CD8-positive, alpha-beta T cell (primary cell): ENCODE measurements at regions of chr17 and their contacts with region 1.

Region 1: GRCh38 chr17:76264755-76265596 is at the start of gene UBALD2:
- DNase-seq: peak; percentile 97 to 99 (median 98)
- ATAC-seq: peak; percentile 80
- H3K4me3 ChIP-seq: peak within 1 kb of the TSS; percentile 76 to 94
- H3K4me3 Mint-ChIP-seq: peak within 1 kb of the TSS; percentile 90
- H3K27ac ChIP-seq: peak within 1 kb of the TSS; percentile 74 to 79
- H3K27ac Mint-ChIP-seq: peak within 1 kb of the TSS; percentile 95
- H3K4me1 ChIP-seq: peaks cover 68% of the 10 kb centered on the region
- H3K4me1 Mint-ChIP-seq: peaks cover 60% of the 10 kb centered on the region
- H3K27me3 ChIP-seq: no peaks in the 10 kb centered on the region
- H3K27me3 Mint-ChIP-seq: no peaks in the 10 kb centered on the region
- CTCF ChIP-seq: no peak
- total RNA-seq, gene UBALD2: 241 to 249 TPM

Region 2: DNA sequence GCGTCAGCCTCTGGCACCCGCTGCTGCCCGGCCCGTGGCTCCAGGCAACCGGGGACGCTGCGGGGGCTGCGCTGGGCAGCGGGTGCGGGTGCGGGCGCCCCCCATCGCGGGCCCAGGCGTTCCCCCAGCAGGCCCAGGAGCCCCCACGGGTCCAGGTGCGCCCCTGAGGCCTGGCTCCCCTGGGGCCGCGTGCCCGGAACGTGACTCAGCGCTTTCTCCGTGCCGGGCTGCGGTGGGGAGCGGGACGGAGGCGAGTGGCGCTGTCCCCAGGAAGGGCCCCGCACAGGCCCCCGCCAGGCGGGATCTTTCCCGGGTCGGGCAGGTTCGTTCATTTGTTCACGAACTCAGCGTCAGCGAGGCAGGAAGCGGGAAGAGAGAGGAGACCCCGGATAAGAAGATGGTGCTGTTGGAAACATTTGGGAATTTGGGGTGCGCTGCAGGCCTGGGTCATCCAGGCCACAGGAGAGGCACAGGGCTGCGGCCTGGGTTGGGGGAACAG is 143.0 kb before region 1 on chr17:
- CTCF ChIA-PET with region 1: interaction called, 85 read pairs
- POLR2A ChIA-PET with region 1: interaction called, 5 read pairs
- intact Hi-C with region 1: no loop called
- DNase-seq: peak in 3 of 9 experiments; percentile 23 to 63 (median 48)
- ATAC-seq: peak; percentile 10
- H3K4me3 ChIP-seq: peak overlapping the region; percentile 47 to 49
- H3K4me3 Mint-ChIP-seq: peak overlapping the region; percentile 37
- H3K27ac ChIP-seq: peak overlapping the region in 1 of 2 experiments; percentile 27
- H3K27ac Mint-ChIP-seq: no peak overlapping the region
- H3K4me1 ChIP-seq: peaks cover 33% of the 10 kb centered on the region
- H3K4me1 Mint-ChIP-seq: peaks cover 20% of the 10 kb centered on the region
- H3K27me3 ChIP-seq: no peaks in the 10 kb centered on the region
- H3K27me3 Mint-ChIP-seq: no peaks in the 10 kb centered on the region
- CTCF ChIP-seq: no peak

Region 3: GRCh38 chr17:76182016-76182764 is 82.8 kb before region 1 on chr17:
- CTCF ChIA-PET with region 1: interaction called, 86 read pairs
- POLR2A ChIA-PET with region 1: interaction called, 104 read pairs
- intact Hi-C with region 1: no loop called
- DNase-seq: peak; percentile 90 to 98 (median 93)
- ATAC-seq: peak; percentile 77
- H3K4me3 ChIP-seq: no peak overlapping the region
- H3K4me3 Mint-ChIP-seq: peak overlapping the region; percentile 64
- H3K27ac ChIP-seq: peak overlapping the region; percentile 42 to 46
- H3K27ac Mint-ChIP-seq: peak overlapping the region; percentile 95
- H3K4me1 ChIP-seq: peaks cover 73% of the 10 kb centered on the region
- H3K4me1 Mint-ChIP-seq: peaks cover 65% of the 10 kb centered on the region
- H3K27me3 ChIP-seq: no peaks in the 10 kb centered on the region
- H3K27me3 Mint-ChIP-seq: no peaks in the 10 kb centered on the region
- CTCF ChIP-seq: peak; percentile 69

Region 4: DNA sequence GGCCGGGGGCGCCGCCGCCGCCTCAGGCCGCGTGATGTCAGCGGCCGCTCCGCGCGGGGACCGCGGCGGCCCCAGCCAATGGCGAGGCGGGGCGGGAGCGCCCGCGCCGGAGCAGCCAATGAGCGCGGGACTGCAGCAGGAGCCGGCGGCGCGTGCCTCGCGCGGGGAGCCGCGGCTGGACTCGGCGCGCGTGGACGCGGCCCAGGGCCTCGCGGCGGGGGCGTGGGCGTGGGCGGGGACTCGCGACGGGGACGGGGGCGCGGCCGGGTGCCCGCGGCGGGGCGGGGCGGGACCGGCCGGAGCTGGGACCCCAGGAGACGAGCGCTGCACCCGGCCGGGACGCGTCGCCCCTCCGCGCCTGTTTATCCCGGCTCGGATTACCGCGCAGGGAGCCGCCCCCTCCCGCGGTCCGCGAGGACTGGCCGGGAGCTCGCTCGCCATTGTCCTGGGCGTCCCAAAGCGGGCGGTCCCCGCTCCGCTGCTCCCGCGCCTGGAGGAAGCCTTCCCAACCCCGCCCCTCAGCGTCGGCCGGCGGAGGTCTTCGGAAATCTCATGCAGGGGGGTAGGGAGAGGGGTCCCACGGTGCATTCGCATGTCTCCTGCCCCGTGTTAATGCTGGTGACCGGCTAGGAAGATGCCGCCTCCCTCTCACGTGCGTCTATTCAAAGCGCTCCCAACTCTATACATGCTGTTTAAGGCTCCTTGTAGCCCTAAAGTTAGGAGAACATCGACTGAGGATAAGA is 24.3 kb before region 1 on chr17 and contains the start of gene RNF157:
- CTCF ChIA-PET with region 1: interaction called, 13 read pairs
- POLR2A ChIA-PET with region 1: interaction called, 72 read pairs
- intact Hi-C with region 1: loop called (anchors 1 kb)
- DNase-seq: peak in 8 of 9 experiments; percentile 48 to 87 (median 64)
- ATAC-seq: peak; percentile 88
- H3K4me3 ChIP-seq: peak within 1 kb of the TSS; percentile 61 to 77
- H3K4me3 Mint-ChIP-seq: peak within 1 kb of the TSS; percentile 87
- H3K27ac ChIP-seq: peak within 1 kb of the TSS; percentile 49 to 63
- H3K27ac Mint-ChIP-seq: peak within 1 kb of the TSS; percentile 91
- H3K4me1 ChIP-seq: peaks cover 52% of the 10 kb centered on the region
- H3K4me1 Mint-ChIP-seq: peaks cover 54% of the 10 kb centered on the region
- H3K27me3 ChIP-seq: no peaks in the 10 kb centered on the region
- H3K27me3 Mint-ChIP-seq: no peaks in the 10 kb centered on the region
- CTCF ChIP-seq: no peak
- total RNA-seq, gene RNF157: 22.3 to 25.5 TPM

Region 5: DNA sequence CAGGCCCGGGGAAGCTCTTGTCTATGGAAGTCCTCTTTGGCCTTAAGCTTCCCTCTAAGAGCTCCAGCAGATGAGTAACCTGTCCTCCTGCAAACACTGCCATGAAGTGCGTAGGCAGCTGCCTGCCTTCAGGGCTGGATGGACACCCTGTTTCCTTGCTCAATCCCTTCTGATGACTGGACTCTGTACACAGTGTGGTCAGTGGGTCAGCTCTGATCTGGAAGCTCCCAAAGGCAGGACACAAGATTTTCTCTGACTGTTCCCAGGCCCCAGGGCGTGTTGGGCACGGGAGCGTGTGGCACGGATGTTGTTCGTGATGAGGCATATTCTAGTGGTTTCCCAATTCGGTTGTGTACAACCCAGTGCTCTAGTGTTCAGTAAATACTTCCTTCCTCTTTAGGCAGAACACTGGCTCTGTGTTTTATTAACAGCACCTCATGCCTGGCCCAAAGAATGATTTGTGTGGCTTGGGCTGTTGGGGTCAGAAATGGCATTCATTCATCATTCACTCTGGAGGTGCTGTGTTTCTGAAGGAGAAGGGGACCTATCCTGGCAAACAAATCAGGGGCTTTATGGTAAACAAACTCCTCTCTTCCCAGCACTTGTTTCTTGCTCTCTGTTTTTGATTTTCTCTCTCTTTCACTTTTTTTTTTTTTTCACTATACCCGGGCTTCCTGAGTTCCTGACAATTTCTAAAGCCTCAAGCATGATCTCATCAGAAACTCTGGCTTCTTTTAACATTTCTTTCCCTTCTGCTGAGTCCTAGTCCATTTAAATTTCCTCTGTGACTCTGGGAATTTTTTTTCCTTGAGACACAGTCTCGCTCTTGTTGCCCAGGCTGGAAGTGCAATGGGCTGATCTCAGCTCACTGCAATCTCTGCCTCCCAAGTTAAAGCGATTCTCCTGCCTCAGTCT is 12.7 kb before region 1 on chr17:
- CTCF ChIA-PET with region 1: interaction called, 15 read pairs
- POLR2A ChIA-PET with region 1: interaction called, 121 read pairs
- intact Hi-C with region 1: loop called in 1 of 2 experiments (anchors 1 kb)
- DNase-seq: peak in 3 of 9 experiments; percentile 48 to 74 (median 70)
- ATAC-seq: peak; percentile 47
- H3K4me3 ChIP-seq: peak overlapping the region in 1 of 2 experiments; percentile 12
- H3K4me3 Mint-ChIP-seq: peak overlapping the region; percentile 61
- H3K27ac ChIP-seq: peak overlapping the region; percentile 7 to 74
- H3K27ac Mint-ChIP-seq: peak overlapping the region; percentile 96
- H3K4me1 ChIP-seq: peaks cover 44% of the 10 kb centered on the region
- H3K4me1 Mint-ChIP-seq: peaks cover 60% of the 10 kb centered on the region
- H3K27me3 ChIP-seq: no peaks in the 10 kb centered on the region
- H3K27me3 Mint-ChIP-seq: no peaks in the 10 kb centered on the region
- CTCF ChIP-seq: no peak

Region 6: DNA sequence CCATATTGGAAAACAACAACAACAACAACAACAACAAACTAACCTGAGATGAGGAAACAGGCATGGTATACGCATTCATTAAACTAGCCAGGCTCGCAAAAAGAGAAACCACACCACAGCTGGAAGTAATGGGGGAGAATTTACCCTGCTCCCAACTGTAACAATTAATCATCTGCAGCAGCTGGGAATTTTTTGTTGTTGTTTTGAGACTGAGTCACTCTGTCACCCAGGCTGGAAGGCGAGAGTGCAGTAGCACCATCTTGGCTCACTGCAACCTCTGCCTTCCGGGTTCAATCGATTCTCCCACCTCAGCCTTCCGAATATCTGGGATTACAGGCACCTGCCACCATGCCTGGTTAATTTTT is 72.4 kb after region 1 on chr17:
- CTCF ChIA-PET with region 1: no interaction called
- POLR2A ChIA-PET with region 1: no interaction called
- intact Hi-C with region 1: no loop called
- DNase-seq: no peak
- ATAC-seq: no peak
- H3K4me3 ChIP-seq: no peak overlapping the region
- H3K4me3 Mint-ChIP-seq: no peak overlapping the region
- H3K27ac ChIP-seq: no peak overlapping the region
- H3K27ac Mint-ChIP-seq: no peak overlapping the region
- H3K4me1 ChIP-seq: no peaks in the 10 kb centered on the region
- H3K4me1 Mint-ChIP-seq: peaks cover 4% of the 10 kb centered on the region
- H3K27me3 ChIP-seq: no peaks in the 10 kb centered on the region
- H3K27me3 Mint-ChIP-seq: no peaks in the 10 kb centered on the region
- CTCF ChIP-seq: no peak